IMR-90 (cell line): ENCODE measurements at regions of chr9 and their contacts with region 1.

Region 1: GRCh38 chr9:124551472-124552272 is 44.5 kb upstream of the NR5A1 start:
- DNase-seq: peak; percentile 73
- ATAC-seq: peak; percentile 90
- H3K4me3 ChIP-seq: no peak overlapping the region
- H3K27ac ChIP-seq: no peak overlapping the region
- H3K4me1 ChIP-seq: peaks cover 19% of the 10 kb centered on the region
- H3K27me3 ChIP-seq: peaks cover 5% of the 10 kb centered on the region; the same call in 1 of the 2 replicates
- CTCF ChIP-seq: peak; percentile 83
- POLR2A ChIP-seq: no peak
- RAD21 ChIP-seq: peak; percentile 79

Region 2: GRCh38 chr9:124537926-124538325 is 13.7 kb before region 1 on chr9:
- CTCF ChIA-PET with region 1: interaction called, 13 read pairs
- POLR2A ChIA-PET with region 1: no interaction called
- dilution Hi-C with region 1: no loop called
- in situ Hi-C with region 1: no loop called
- intact Hi-C with region 1: no loop called
- DNase-seq: no peak
- ATAC-seq: no peak
- H3K4me3 ChIP-seq: no peak overlapping the region
- H3K27ac ChIP-seq: no peak overlapping the region
- H3K4me1 ChIP-seq: no peaks in the 10 kb centered on the region
- H3K27me3 ChIP-seq: peaks cover 10% of the 10 kb centered on the region
- CTCF ChIP-seq: no peak
- POLR2A ChIP-seq: no peak
- RAD21 ChIP-seq: no peak

Region 3: GRCh38 chr9:124574534-124575341 is 23.1 kb after region 1 on chr9:
- CTCF ChIA-PET with region 1: interaction called, 12 read pairs
- POLR2A ChIA-PET with region 1: no interaction called
- dilution Hi-C with region 1: no loop called
- in situ Hi-C with region 1: no loop called
- intact Hi-C with region 1: no loop called
- DNase-seq: peak; percentile 91
- ATAC-seq: peak; percentile 93
- H3K4me3 ChIP-seq: no peak overlapping the region
- H3K27ac ChIP-seq: no peak overlapping the region; the same call in 1 of the 2 replicates
- H3K4me1 ChIP-seq: peaks cover 4% of the 10 kb centered on the region
- H3K27me3 ChIP-seq: no peaks in the 10 kb centered on the region
- CTCF ChIP-seq: no peak
- POLR2A ChIP-seq: no peak
- RAD21 ChIP-seq: no peak

Region 4: DNA sequence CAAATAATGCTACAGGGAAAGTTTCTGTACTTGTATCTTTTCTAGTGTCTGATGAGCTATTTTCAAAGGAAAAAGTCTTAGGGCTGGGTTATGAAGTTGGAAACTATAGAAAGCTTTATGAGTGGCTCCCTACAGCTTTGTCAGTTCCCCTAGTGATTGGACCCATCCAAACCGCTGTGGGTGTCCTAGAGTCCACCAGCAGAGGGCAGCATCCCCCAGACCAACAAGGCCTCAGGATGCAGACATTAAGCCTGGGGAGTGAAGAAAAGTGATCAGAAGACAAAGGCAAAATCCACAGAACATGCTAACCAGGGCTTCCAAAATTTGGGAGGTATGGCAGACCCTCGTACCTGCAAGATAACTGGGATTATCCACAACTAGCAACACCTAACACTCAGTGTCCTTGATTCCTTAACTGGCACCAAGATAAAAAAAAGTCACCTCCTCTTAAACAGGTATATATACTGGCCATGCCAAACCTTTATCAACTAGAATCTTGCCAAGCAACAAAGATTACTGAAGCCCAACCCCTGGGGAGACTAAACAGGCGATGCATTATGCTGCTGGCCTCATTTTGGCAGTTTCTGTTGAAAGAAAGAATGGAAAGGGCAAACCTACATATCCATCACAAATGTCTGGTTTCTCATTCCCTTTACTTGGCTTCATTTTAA is 65.9 kb after region 1 on chr9:
- CTCF ChIA-PET with region 1: interaction called, 20 read pairs
- POLR2A ChIA-PET with region 1: no interaction called
- dilution Hi-C with region 1: no loop called
- in situ Hi-C with region 1: no loop called
- intact Hi-C with region 1: loop called (anchors 1 kb)
- DNase-seq: peak; percentile 79
- ATAC-seq: peak; percentile 98
- H3K4me3 ChIP-seq: no peak overlapping the region
- H3K27ac ChIP-seq: no peak overlapping the region
- H3K4me1 ChIP-seq: peaks cover 2% of the 10 kb centered on the region
- H3K27me3 ChIP-seq: peaks cover 7% of the 10 kb centered on the region
- CTCF ChIP-seq: peak; percentile 97
- POLR2A ChIP-seq: peak; percentile 44; the same call in 1 of the 2 replicates
- RAD21 ChIP-seq: peak; percentile 98

Region 5: GRCh38 chr9:124658165-124659017 is 106.7 kb after region 1 on chr9:
- CTCF ChIA-PET with region 1: interaction called, 8 read pairs
- POLR2A ChIA-PET with region 1: no interaction called
- dilution Hi-C with region 1: no loop called
- in situ Hi-C with region 1: no loop called
- intact Hi-C with region 1: loop called (anchors 5 kb)
- DNase-seq: peak; percentile 97
- ATAC-seq: peak; percentile 86
- H3K4me3 ChIP-seq: peak overlapping the region; percentile 57
- H3K27ac ChIP-seq: peak overlapping the region; percentile 95
- H3K4me1 ChIP-seq: peaks cover 11% of the 10 kb centered on the region
- H3K27me3 ChIP-seq: no peaks in the 10 kb centered on the region
- CTCF ChIP-seq: no peak
- POLR2A ChIP-seq: peak; percentile 99
- RAD21 ChIP-seq: no peak

Region 6: DNA sequence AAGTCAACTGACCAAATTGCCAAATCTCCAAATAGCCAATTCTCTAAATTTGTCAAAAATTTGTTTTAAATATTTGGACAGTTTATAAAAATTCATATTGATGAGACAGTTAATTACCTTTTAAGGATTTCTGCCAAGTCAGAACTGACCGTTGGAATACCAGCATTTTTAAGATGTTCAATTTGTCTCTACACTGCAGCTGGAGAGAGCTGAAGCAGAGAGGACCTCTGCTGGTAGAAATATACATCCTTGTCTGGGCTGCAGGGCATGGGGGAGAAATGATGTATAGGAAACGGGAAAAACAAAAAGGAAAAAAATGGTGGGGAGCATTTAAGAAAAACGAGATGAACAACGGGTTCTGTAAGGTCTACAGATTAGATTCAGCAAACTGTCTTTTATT is 202.6 kb after region 1 on chr9:
- CTCF ChIA-PET with region 1: interaction called, 4 read pairs
- POLR2A ChIA-PET with region 1: no interaction called
- dilution Hi-C with region 1: no loop called
- in situ Hi-C with region 1: no loop called
- intact Hi-C with region 1: loop called (anchors 5 kb)
- DNase-seq: peak; percentile 55
- ATAC-seq: peak; percentile 63
- H3K4me3 ChIP-seq: no peak overlapping the region
- H3K27ac ChIP-seq: no peak overlapping the region
- H3K4me1 ChIP-seq: peaks cover 11% of the 10 kb centered on the region
- H3K27me3 ChIP-seq: peaks cover 28% of the 10 kb centered on the region
- CTCF ChIP-seq: peak; percentile 64
- POLR2A ChIP-seq: no peak
- RAD21 ChIP-seq: peak; percentile 64